Right ventricle myocardium inferior (tissue), 1 donor: ENCODE measurements at regions of chr14 and their contacts with region 1.

Region 1: GRCh38 chr14:95098984-95099599 is 58.2 kb downstream of the DICER1 start:
- DNase-seq: peak; percentile 86
- ATAC-seq: peak; percentile 63

Region 2: DNA sequence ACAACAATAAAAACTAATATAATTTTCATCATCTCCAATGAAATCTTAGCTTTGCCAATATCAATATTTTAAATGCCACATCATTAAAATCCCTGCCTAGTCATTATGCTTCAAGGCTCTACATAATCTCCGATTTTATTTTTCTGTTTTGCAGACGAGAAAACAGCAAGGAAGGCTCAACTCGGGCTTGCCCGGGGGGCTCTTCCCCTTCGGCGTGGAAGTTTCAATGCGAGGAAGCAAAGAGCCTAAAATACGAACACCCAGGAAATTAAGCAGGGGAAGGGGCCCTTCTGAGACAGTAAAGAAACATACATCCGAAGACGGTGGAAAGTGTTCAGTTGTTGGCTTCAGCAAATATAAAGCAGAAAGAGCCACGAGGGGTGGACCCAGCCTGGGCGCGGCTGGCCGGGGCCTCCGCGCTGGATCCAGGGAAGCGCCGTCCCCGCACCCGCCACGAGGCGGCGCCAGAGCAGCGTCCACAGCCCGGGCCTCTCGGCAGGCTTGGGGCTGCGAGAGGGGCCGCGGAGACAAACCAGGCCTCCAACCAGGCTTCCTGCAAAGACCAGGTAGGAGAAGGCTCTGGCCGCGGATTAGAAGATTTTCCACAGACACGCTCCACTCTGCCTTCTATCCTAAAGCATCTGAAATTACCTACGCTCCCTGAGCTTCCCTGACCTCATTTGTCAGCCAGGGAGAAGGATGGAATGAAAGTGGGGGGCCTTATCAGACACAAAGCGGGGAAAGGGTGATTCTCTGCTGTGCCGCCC is 409.7 kb before region 1 on chr14:
- intact Hi-C with region 1: loop called (anchors 2 kb)
- DNase-seq: peak; percentile 82
- ATAC-seq: peak; percentile 93

Region 3: DNA sequence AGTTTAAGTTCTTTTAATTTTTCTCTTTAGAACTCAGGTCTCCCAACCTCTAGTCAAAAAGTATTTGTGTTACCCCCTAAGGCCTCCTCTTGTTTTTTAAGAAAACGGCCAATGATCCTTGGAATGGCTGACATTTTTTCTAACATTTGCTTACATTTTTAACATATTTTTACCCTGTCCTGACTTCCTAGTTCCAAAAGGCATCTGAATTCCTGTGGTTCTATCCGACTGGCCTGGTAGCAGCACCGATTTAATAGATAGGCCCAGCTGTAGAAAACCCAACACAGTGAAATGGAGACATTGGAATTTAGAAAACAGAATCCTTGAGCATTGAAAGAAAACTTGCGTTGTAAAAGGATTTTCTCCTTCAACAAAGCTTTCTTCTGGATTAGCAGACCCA is 194.5 kb before region 1 on chr14:
- intact Hi-C with region 1: loop called (anchors 10 kb)
- DNase-seq: no peak
- ATAC-seq: no peak